Cardiac septum (tissue), 1 donor: ENCODE measurements at regions of chr15 and their contacts with region 1.

Region 1: GRCh38 chr15:41695750-41696426 is 35.7 kb downstream of the MGA start:
- DNase-seq: no peak

Region 2: GRCh38 chr15:41756198-41756597 is 60.3 kb after region 1 on chr15:
- intact Hi-C with region 1: loop called (anchors 10 kb)
- DNase-seq: no peak

Region 3: GRCh38 chr15:41993447-41994167 is 297.7 kb after region 1 on chr15:
- intact Hi-C with region 1: no loop called
- DNase-seq: peak; percentile 47